ENCODE measurements at regions of chr14 and their contacts with region 1.

Region 1: GRCh38 chr14:87081004-87081403 is 912.0 kb downstream of the GALC start:
- DNase-seq: no peak
- ATAC-seq: no peak
- H3K4me3 ChIP-seq: no peak overlapping the region
- H3K27ac ChIP-seq: no peak overlapping the region
- H3K4me1 ChIP-seq: no peaks in the 10 kb centered on the region
- H3K27me3 ChIP-seq: no peaks in the 10 kb centered on the region
- CTCF ChIP-seq: no peak

Region 2: DNA sequence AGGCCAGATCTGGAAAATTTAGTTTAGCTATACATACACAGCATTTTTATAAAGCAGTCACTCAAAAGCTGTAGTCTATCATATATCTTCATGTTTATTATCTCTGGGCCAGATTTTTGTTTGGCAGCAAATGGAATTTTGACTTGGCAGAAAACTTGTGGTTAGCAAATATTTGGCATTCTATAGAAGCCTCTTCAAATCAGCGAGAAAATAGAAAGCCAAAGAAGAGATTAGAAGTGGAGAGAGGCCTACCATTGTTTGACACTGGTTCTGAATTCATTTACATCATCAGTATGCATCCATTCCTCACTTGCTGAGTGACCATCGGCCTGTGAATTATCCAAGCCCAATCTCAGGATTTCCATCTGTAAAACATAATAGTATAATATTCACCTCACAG is 165.6 kb before region 1 on chr14:
- intact Hi-C with region 1: no loop called
- DNase-seq: no peak
- ATAC-seq: no peak
- H3K4me3 ChIP-seq: no peak overlapping the region
- H3K27ac ChIP-seq: no peak overlapping the region
- H3K4me1 ChIP-seq: no peaks in the 10 kb centered on the region
- H3K27me3 ChIP-seq: no peaks in the 10 kb centered on the region
- CTCF ChIP-seq: no peak

Region 3: DNA sequence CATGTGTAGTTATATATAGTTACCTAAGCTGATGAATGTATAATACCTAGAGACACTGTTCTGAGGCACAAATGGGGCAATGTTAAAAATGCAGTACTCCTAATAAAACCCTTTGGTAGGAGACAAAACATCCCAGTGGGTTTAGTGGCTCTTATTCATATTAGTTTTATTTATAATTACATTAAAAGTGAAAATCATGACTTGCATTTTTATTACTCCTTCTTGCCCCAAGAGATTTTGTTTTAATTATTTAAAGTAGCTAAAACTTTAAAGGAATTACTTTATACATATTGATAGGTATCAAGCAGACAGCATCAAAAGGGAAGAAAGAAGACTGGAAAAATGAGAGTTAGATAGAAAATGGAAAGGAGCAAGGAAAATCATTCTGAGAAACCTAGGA is 223.4 kb after region 1 on chr14:
- intact Hi-C with region 1: loop called (anchors 5 kb)
- DNase-seq: no peak
- ATAC-seq: no peak
- H3K4me3 ChIP-seq: no peak overlapping the region
- H3K27ac ChIP-seq: no peak overlapping the region
- H3K4me1 ChIP-seq: no peaks in the 10 kb centered on the region
- H3K27me3 ChIP-seq: no peaks in the 10 kb centered on the region
- CTCF ChIP-seq: no peak